CD4-positive, alpha-beta T cell (primary cell): ENCODE measurements at regions of chr5 and their contacts with region 1.

Region 1: GRCh38 chr5:133868946-133869518 is 99.4 kb downstream of the C5orf15 start:
- DNase-seq: peak; percentile 44 to 83 (median 62)
- ATAC-seq: peak; percentile 78
- H3K4me3 ChIP-seq: no peak overlapping the region
- H3K4me3 Mint-ChIP-seq: no peak overlapping the region
- H3K27ac ChIP-seq: no peak overlapping the region
- H3K27ac Mint-ChIP-seq: no peak overlapping the region
- H3K4me1 ChIP-seq: no peaks in the 10 kb centered on the region
- H3K4me1 Mint-ChIP-seq: peaks cover 5% of the 10 kb centered on the region
- H3K27me3 ChIP-seq: peaks cover 0 to 7% of the 10 kb centered on the region in 2 experiments
- H3K27me3 Mint-ChIP-seq: peaks cover 27% of the 10 kb centered on the region
- CTCF ChIP-seq: peak; percentile 78

Region 2: GRCh38 chr5:133423618-133424282 is 445.3 kb before region 1 on chr5:
- CTCF ChIA-PET with region 1: interaction called, 5 read pairs
- POLR2A ChIA-PET with region 1: no interaction called
- intact Hi-C with region 1: loop called (anchors 1 to 2 kb)
- DNase-seq: peak; percentile 46 to 76 (median 56)
- ATAC-seq: peak; percentile 78
- H3K4me3 ChIP-seq: no peak overlapping the region
- H3K4me3 Mint-ChIP-seq: no peak overlapping the region
- H3K27ac ChIP-seq: no peak overlapping the region
- H3K27ac Mint-ChIP-seq: no peak overlapping the region
- H3K4me1 ChIP-seq: peaks cover 11% of the 10 kb centered on the region
- H3K4me1 Mint-ChIP-seq: peaks cover 9% of the 10 kb centered on the region
- H3K27me3 ChIP-seq: no peaks in the 10 kb centered on the region
- H3K27me3 Mint-ChIP-seq: no peaks in the 10 kb centered on the region
- CTCF ChIP-seq: peak; percentile 94

Region 3: GRCh38 chr5:133552931-133553525 is 316.0 kb before region 1 on chr5:
- CTCF ChIA-PET with region 1: no interaction called
- POLR2A ChIA-PET with region 1: no interaction called
- intact Hi-C with region 1: loop called in 1 of 2 experiments (anchors 2 kb)
- DNase-seq: peak; percentile 14 to 69 (median 28)
- ATAC-seq: peak; percentile 48
- H3K4me3 ChIP-seq: no peak overlapping the region
- H3K4me3 Mint-ChIP-seq: no peak overlapping the region
- H3K27ac ChIP-seq: no peak overlapping the region
- H3K27ac Mint-ChIP-seq: no peak overlapping the region
- H3K4me1 ChIP-seq: no peaks in the 10 kb centered on the region
- H3K4me1 Mint-ChIP-seq: no peaks in the 10 kb centered on the region
- H3K27me3 ChIP-seq: peaks cover 9 to 15% of the 10 kb centered on the region in 2 experiments
- H3K27me3 Mint-ChIP-seq: peaks cover 67% of the 10 kb centered on the region
- CTCF ChIP-seq: peak; percentile 64

Region 4: DNA sequence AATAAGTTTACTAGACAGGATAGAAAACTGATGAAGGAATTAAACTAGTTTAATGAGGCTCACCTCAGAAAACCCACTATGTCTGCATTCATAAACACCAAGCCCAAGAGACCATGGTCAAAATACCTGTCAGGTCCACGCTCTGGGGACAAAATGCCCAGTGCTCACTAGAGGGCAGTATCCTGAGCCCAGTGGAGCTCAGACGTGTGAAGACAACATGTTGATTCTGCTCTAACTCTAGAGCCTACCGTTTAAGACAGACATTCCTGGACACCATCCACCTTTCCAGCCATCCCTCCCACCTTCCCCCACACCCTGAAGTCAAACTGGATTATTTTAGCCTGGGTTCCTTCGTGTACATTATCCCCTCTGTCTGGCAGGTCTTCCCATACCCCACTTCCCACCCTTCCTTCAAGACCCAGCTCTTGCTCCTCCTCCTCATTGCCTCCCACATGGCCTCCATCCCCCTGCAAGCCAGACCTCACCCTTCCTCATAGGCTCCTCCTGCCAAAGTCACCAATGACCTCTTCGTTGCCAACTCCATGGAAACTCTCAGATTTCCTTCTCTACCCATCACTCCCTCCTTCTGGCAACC is 114.4 kb before region 1 on chr5:
- CTCF ChIA-PET with region 1: no interaction called
- POLR2A ChIA-PET with region 1: no interaction called
- intact Hi-C with region 1: loop called in 1 of 2 experiments (anchors 10 kb)
- DNase-seq: peak in 4 of 14 experiments; percentile 6 to 25 (median 18)
- ATAC-seq: no peak
- H3K4me3 ChIP-seq: no peak overlapping the region
- H3K4me3 Mint-ChIP-seq: no peak overlapping the region
- H3K27ac ChIP-seq: no peak overlapping the region
- H3K27ac Mint-ChIP-seq: no peak overlapping the region
- H3K4me1 ChIP-seq: no peaks in the 10 kb centered on the region
- H3K4me1 Mint-ChIP-seq: no peaks in the 10 kb centered on the region
- H3K27me3 ChIP-seq: peaks cover 12 to 14% of the 10 kb centered on the region in 2 experiments
- H3K27me3 Mint-ChIP-seq: peaks cover 27% of the 10 kb centered on the region
- CTCF ChIP-seq: peak; percentile 21